Tibial artery (tissue), 4 donors: ENCODE measurements at regions of chr6 and their contacts with region 1.

Region 1: DNA sequence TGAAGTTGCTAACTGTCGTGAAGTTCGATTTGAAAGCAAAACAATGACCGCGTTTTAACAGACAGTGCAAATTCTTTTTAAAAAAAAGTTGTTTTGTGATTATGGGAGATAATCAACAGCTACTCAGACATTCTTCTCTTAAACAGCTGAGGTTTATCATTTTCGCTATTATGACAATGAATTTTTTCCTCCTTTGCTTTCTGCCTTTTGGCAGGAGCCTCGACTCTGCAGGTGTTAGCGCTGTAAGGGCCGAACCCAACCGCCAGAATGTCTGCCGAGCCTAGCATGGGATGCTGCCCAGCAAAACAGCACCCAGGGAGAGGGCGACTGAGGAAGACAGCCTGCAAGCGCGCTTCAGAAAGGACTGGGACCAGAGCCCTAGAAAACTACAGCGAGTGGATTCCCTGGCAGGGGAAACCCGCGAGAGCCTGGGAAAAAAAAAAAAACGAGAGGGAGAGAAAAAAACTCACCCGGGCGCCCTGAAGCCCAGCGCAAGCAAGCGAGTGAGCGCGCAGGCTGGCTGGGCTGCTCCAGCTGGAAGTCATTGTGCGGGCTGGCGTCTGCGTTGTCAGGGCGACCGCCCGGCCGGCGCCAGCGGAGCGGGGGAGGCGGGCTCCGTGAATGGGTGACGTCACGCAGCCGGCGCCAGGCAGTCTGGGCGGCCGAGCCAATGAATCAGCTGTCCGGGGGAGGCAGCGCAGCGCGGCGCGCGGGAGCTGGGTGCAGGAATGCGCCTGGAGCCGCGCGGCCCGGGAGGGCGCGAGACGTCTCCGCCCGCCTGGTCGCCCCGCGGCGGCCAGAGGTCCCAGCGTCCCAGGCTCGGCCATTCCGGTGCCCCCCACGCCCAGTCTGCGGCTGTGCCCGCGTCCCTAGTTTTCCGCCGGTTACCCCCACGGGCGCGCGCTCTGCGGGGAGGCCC is 32.7 kb upstream of the ID4 start:
- DNase-seq: peak; percentile 93 to 99
- H3K4me3 ChIP-seq: peak overlapping the region; percentile 61 to 70
- H3K27ac ChIP-seq: peak overlapping the region; percentile 99
- H3K4me1 ChIP-seq: peaks cover 0 to 37% (median 19%) of the 10 kb centered on the region in 4 donors
- H3K27me3 ChIP-seq: no peaks in the 10 kb centered on the region
- CTCF ChIP-seq: peak in 1 of 2 experiments; percentile 21

Region 2: DNA sequence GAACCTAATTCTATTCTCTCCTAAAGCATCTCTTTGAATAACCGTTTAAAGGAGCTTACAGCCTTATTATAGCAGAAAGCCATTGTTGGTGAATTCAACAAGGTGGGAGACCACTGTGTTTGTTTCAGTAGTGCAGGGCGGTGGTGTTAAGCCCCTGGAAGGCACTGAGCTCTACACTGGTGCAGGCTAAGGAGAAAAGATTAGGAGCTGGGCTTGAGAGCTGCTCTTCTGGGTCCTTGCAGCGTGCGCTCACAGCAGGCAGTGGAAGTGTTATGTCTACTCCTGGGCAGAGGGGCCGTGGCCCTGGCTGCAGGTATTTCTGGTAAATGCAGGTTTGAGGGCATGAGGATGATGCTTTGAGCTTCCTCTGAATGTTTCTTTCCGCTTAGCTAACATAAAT is 1056.2 kb before region 1 on chr6:
- intact Hi-C with region 1: loop called (anchors 5 kb)
- DNase-seq: no peak
- H3K4me3 ChIP-seq: no peak overlapping the region
- H3K27ac ChIP-seq: no peak overlapping the region
- H3K4me1 ChIP-seq: peaks cover 0 to 9% (median 4%) of the 10 kb centered on the region in 4 donors
- H3K27me3 ChIP-seq: no peaks in the 10 kb centered on the region
- CTCF ChIP-seq: no peak

Region 3: GRCh38 chr6:19261642-19262041 is 542.8 kb before region 1 on chr6:
- intact Hi-C with region 1: no loop called
- DNase-seq: no peak
- H3K4me3 ChIP-seq: no peak overlapping the region
- H3K27ac ChIP-seq: no peak overlapping the region
- H3K4me1 ChIP-seq: peaks cover 0 to 12% (median 0%) of the 10 kb centered on the region in 4 donors
- H3K27me3 ChIP-seq: no peaks in the 10 kb centered on the region
- CTCF ChIP-seq: no peak

Region 4: DNA sequence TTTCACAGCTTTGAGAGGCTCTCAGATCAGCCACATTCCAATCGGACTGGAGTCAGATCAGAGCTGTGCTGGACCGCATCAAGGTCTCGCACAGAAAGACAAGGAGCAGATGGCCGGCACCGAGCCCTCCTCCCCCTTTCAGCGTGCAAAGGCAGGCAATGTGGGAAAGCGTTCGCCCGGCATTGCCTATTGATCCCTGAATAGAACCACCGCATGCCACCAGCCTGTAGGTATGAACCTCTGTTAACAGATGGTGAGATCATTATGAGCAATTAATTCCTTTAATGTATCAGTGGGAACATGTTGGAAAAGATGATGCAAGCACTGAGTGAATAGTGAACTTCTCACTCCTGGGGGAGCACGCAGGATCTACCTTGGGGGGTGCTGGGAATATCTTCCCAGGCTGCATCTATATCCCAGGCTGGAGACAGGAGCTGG is 84.8 kb before region 1 on chr6:
- intact Hi-C with region 1: loop called (anchors 10 kb)
- DNase-seq: no peak
- H3K4me3 ChIP-seq: no peak overlapping the region
- H3K27ac ChIP-seq: peak overlapping the region; percentile 50 to 60
- H3K4me1 ChIP-seq: peaks cover 0 to 66% (median 22%) of the 10 kb centered on the region in 4 donors
- H3K27me3 ChIP-seq: no peaks in the 10 kb centered on the region
- CTCF ChIP-seq: no peak

Region 5: DNA sequence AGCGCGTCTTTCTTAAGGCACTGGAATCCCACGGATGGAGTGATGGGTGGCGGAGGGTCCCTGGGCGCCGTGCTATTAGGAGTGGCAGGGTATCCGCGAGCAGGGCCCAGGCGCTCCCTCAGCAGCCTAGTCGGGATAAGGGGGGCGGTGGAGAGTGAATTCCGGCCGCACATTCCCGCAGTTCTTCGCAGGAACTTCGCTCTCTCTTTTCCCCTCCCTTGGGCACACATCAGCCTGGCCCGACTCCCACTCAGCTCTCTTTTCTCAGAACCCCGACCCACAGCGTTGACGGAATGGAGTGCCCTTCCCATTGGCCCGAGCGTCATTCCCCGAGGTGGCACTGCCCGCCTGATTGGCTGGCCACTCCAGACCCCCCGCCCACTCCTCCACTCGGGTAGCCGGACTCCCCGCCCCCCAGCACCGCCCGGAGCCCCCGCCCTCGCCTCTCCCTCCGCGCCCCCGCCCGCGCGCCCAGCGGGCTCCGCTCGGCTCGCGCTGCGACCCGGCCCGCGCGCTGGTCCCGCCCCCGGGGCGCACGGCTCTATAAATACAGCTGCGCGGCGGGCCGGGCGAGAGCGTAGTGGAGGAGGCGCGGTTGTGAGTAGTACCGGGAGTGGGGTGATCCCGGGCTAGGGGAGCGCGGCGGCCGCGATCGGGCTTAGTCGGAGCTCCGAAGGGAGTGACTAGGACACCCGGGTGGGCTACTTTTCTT is 32.5 kb after region 1 on chr6 and contains the start of gene ID4:
- intact Hi-C with region 1: loop called (anchors 1 kb)
- DNase-seq: peak; percentile 97 to 99
- H3K4me3 ChIP-seq: peak within 1 kb of the TSS; percentile 74 to 78
- H3K27ac ChIP-seq: peak within 1 kb of the TSS; percentile 97 to 98
- H3K4me1 ChIP-seq: peaks cover 0 to 10% (median 0%) of the 10 kb centered on the region in 4 donors
- H3K27me3 ChIP-seq: no peaks in the 10 kb centered on the region
- CTCF ChIP-seq: no peak